ENCODE measurements at regions of chr4 and their contacts with region 1.

Region 1: GRCh38 chr4:88275516-88275915 is 8.8 kb downstream of the PPM1K start:
- DNase-seq: no peak
- ATAC-seq: no peak
- H3K4me3 Mint-ChIP-seq: no peak overlapping the region
- H3K27ac Mint-ChIP-seq: no peak overlapping the region
- H3K4me1 Mint-ChIP-seq: peaks cover 35% of the 10 kb centered on the region
- H3K27me3 Mint-ChIP-seq: no peaks in the 10 kb centered on the region
- CTCF ChIP-seq: no peak

Region 2: GRCh38 chr4:88264336-88264735 is 11.2 kb before region 1 on chr4:
- CTCF ChIA-PET with region 1: interaction called, 15 read pairs
- POLR2A ChIA-PET with region 1: interaction called, 5 read pairs
- intact Hi-C with region 1: no loop called
- DNase-seq: no peak
- ATAC-seq: no peak
- H3K4me3 Mint-ChIP-seq: no peak overlapping the region
- H3K27ac Mint-ChIP-seq: no peak overlapping the region
- H3K4me1 Mint-ChIP-seq: no peaks in the 10 kb centered on the region
- H3K27me3 Mint-ChIP-seq: no peaks in the 10 kb centered on the region
- CTCF ChIP-seq: no peak